GM10248 (cell line): ENCODE measurements at regions of chr15 and their contacts with region 1.

Region 1: GRCh38 chr15:100929641-100930042 is 10.5 kb downstream of the LRRK1 start:
- DNase-seq: peak; percentile 49
- CTCF ChIP-seq: no peak

Region 2: DNA sequence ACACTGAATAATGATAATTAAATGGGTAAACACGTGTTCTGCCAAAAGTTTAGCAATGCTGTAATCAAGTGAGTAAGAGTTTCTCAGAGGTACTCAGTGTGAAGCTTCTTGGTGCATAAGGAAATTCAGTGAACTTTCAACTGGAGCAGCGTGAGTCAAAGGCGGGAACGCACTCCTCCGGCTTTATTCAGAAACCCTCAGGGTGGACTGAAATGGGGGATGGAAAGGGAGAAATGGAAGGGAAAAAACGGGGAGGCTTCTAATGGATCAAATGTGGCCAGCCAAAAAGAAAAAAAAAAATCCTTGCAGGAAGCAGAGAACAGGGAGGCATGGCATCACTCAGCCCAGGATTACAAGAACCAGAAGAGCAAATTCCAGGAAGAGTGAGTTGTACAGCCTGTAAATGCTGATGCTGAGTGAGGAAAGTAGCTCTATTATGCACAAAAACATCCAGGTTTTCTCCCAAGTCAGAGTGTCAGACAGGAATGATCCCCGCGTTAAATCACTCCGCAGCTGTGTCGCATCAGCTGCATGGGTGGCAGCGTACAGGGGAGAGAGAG is 242.0 kb before region 1 on chr15:
- CTCF ChIA-PET with region 1: no interaction called
- POLR2A ChIA-PET with region 1: no interaction called
- DNase-seq: no peak
- CTCF ChIP-seq: no peak

Region 3: DNA sequence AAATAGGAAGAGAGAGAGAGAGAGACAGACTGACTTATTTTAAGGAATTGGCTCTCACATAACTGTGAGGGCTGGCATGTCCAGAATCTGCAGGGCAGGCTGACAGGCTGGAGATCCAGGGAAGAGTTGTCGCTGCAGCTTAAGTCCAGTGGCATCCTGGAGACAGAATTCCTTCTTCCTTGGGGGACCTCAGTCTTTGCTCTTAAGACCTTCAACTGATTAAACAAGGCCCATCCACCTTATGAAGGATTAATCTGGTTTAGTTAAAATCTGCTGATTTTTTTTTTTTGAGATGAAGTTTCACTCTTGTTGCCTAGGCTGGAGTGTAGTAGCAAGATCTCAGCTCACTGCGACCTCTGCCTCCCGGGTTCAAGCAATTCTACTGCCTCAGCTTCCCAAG is 178.1 kb before region 1 on chr15:
- CTCF ChIA-PET with region 1: no interaction called
- POLR2A ChIA-PET with region 1: no interaction called
- DNase-seq: no peak
- CTCF ChIP-seq: no peak

Region 4: GRCh38 chr15:100902436-100903167 is 27.0 kb before region 1 on chr15:
- CTCF ChIA-PET with region 1: no interaction called
- POLR2A ChIA-PET with region 1: no interaction called
- DNase-seq: no peak
- CTCF ChIP-seq: no peak

Region 5: GRCh38 chr15:100940767-100941379 is 11.2 kb after region 1 on chr15:
- CTCF ChIA-PET with region 1: interaction called, 14 read pairs
- POLR2A ChIA-PET with region 1: no interaction called
- DNase-seq: peak; percentile 64
- CTCF ChIP-seq: no peak